Activated CD4-positive, alpha-beta T cell treated with anti-CD3 and anti-CD28 coated beads, Interleukin-2, amount 10 ng/mL, durations not matched to agents 24 days and 14 days (primary cell): ENCODE measurements at regions of chr12 and their contacts with region 1.

Region 1: GRCh38 chr12:48924617-48925303 is 532 bp downstream of the FKBP11 start:
- DNase-seq: peak; percentile 86
- H3K4me3 Mint-ChIP-seq: peak overlapping the region; percentile 83
- H3K27ac Mint-ChIP-seq: peak overlapping the region; percentile 89
- H3K4me1 Mint-ChIP-seq: peaks cover 30% of the 10 kb centered on the region
- H3K27me3 Mint-ChIP-seq: no peaks in the 10 kb centered on the region

Region 2: GRCh38 chr12:48882315-48882687 is 42.5 kb before region 1 on chr12:
- intact Hi-C with region 1: no loop called
- DNase-seq: no peak
- H3K4me3 Mint-ChIP-seq: no peak overlapping the region
- H3K27ac Mint-ChIP-seq: no peak overlapping the region
- H3K4me1 Mint-ChIP-seq: peaks cover 8% of the 10 kb centered on the region
- H3K27me3 Mint-ChIP-seq: peaks cover 38% of the 10 kb centered on the region

Region 3: DNA sequence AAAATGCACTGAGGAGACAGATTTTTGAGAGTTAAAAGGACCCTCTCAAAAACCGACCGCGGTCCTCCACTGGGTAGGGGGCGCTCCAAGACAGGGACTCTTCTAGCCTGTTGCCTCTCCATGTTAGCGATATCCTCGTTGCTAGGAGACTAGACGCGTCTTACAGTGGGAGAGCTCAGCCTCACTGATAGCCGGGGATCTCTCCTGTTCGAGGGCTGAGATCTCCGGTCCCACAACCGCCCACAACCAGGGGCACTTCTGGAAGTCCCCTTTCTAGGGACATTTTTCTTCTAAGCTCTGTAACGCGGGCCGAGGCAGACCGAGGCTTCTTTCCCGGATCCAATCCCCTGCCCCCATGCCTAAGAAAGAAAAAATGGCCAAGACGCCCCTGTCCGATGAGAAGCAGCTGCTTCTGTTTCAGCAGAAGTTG is 20.8 kb before region 1 on chr12:
- intact Hi-C with region 1: loop called (anchors 2 kb)
- DNase-seq: peak; percentile 94
- H3K4me3 Mint-ChIP-seq: peak overlapping the region; percentile 74
- H3K27ac Mint-ChIP-seq: peak overlapping the region; percentile 29
- H3K4me1 Mint-ChIP-seq: peaks cover 12% of the 10 kb centered on the region
- H3K27me3 Mint-ChIP-seq: peaks cover 6% of the 10 kb centered on the region

Region 4: GRCh38 chr12:48957141-48958048 is 32.6 kb after region 1 on chr12 and contains the start of gene ARF3:
- intact Hi-C with region 1: loop called (anchors 2 kb)
- DNase-seq: peak; percentile 98
- H3K4me3 Mint-ChIP-seq: peak within 1 kb of the TSS; percentile 92
- H3K27ac Mint-ChIP-seq: peak within 1 kb of the TSS; percentile 87
- H3K4me1 Mint-ChIP-seq: peaks cover 39% of the 10 kb centered on the region
- H3K27me3 Mint-ChIP-seq: peaks cover 18% of the 10 kb centered on the region
- total RNA-seq, gene ARF3: 109 and 112 TPM in 2 replicates

Region 5: GRCh38 chr12:48995061-48995879 is 70.5 kb after region 1 on chr12:
- intact Hi-C with region 1: loop called (anchors 5 kb)
- DNase-seq: peak; percentile 87
- H3K4me3 Mint-ChIP-seq: peak overlapping the region; percentile 25
- H3K27ac Mint-ChIP-seq: no peak overlapping the region
- H3K4me1 Mint-ChIP-seq: peaks cover 30% of the 10 kb centered on the region
- H3K27me3 Mint-ChIP-seq: peaks cover 54% of the 10 kb centered on the region